ENCODE measurements at regions of chr12 and their contacts with region 1.

Region 1: GRCh38 chr12:22624870-22625761 is at the start of gene ETNK1:
- DNase-seq: peak; percentile 97
- ATAC-seq: peak; percentile 100
- total RNA-seq, gene ETNK1: 22.8 to 28.5 TPM

Region 2: DNA sequence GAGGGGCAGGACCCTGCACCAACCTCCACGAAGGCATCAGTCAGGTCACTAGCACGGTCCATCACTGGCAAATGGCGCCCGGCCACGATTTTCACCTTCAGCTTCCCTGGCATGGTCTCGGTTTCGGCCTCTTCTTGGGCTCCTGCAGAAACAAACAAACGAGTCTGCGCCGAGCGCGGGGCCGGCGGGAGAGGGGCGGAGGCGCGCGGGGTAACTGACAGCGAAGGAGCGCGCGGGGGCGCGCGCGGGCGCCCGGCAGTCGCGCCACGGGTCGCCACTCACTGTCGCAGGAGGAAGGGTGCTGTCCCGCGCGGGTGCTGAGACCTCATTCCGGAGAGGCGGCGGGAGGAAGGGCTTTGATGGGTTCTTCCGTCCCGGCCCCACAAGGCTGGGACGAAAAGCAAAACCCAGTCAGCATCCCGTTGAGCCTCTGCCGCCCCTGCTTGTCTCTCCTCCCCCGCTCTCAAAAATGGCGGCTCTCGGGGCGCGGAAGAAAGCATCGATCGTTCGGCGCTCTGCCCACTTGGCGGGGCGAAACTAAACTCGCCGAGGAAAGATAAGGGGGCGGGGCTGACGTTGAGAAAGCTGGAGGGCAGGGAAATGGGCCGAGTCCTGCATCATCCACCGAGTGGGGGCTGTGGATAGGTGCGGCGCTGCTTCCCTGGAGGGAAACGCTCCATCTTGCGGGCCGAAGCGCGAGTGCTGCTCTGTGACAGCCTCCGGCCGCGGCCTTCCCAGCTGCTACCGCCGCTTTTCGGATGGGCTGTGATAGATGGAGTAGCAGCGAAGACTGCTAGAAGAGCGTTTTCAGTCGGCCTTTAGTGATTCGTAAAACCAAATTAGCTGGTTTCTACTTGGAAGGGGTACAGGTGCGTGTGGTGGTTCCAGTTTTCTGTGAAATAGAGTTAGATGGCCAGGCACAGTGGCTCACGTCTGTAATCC is 80.8 kb before region 1 on chr12 and contains the start of gene C2CD5:
- intact Hi-C with region 1: loop called in 1 of 2 experiments (anchors 2 kb)
- DNase-seq: peak; percentile 98
- ATAC-seq: peak; percentile 96 to 98
- total RNA-seq, gene C2CD5: 18.4 to 22.8 TPM

Region 3: GRCh38 chr12:22577667-22578066 is 47.4 kb before region 1 on chr12:
- intact Hi-C with region 1: no loop called
- DNase-seq: no peak
- ATAC-seq: no peak

Measured in left cardiac atrium (tissue), 4 donors.